B cell (primary cell): ENCODE measurements at regions of chr14 and their contacts with region 1.

Region 1: GRCh38 chr14:68283378-68284123 is 464.0 kb downstream of the RAD51B start:
- DNase-seq: peak; percentile 87
- ATAC-seq: peak; percentile 69
- H3K4me3 ChIP-seq: peak overlapping the region in 3 of 5 experiments; percentile 5 to 31 (median 7)
- H3K4me3 Mint-ChIP-seq: peak overlapping the region; percentile 83
- H3K27ac ChIP-seq: peak overlapping the region; percentile 91 to 98
- H3K27ac Mint-ChIP-seq: peak overlapping the region; percentile 98
- H3K4me1 ChIP-seq: peaks cover 93 to 96% of the 10 kb centered on the region in 2 donors
- H3K4me1 Mint-ChIP-seq: peaks cover 95% of the 10 kb centered on the region
- H3K27me3 ChIP-seq: no peaks in the 10 kb centered on the region
- H3K27me3 Mint-ChIP-seq: no peaks in the 10 kb centered on the region
- CTCF ChIP-seq: no peak

Region 2: DNA sequence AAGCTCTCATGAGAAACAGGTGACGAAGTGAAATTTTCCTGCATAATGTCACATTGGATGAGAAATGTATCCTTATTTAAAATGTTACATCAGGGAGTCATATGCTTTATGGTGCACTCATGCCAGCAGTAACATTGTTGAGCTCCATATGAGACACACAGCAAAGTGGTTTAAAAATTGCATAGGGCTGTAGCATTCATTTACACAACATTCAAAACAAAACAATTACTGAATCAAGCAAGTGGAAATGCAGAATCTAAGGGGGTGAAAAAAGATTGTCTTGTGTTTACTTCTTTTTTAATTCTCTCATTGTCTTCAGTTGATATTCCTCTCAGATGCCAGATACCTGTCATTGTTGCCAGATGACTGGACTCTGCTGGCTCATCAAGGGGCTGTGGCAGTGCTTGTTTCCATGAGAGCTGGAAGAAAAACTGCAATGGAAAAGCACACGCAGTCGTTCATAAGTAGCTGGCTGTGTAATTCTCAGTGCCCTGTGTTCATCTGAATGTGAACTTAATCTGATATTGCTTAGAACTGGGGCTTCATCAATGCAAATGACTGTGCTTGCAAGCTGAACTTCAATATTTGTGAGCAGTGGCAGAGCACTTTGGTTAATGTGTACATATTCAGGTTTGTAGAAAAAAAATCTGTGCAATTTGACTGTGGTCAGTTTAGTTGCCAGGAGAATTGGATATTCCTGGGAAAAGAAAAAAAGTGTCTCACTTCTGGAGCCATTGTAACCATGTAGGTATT is 158.4 kb before region 1 on chr14:
- CTCF ChIA-PET with region 1: no interaction called
- POLR2A ChIA-PET with region 1: no interaction called
- intact Hi-C with region 1: no loop called
- DNase-seq: no peak
- ATAC-seq: no peak
- H3K4me3 ChIP-seq: no peak overlapping the region
- H3K4me3 Mint-ChIP-seq: no peak overlapping the region
- H3K27ac ChIP-seq: no peak overlapping the region
- H3K27ac Mint-ChIP-seq: no peak overlapping the region
- H3K4me1 ChIP-seq: no peaks in the 10 kb centered on the region
- H3K4me1 Mint-ChIP-seq: no peaks in the 10 kb centered on the region
- H3K27me3 ChIP-seq: no peaks in the 10 kb centered on the region
- H3K27me3 Mint-ChIP-seq: no peaks in the 10 kb centered on the region
- CTCF ChIP-seq: no peak

Region 3: GRCh38 chr14:68268197-68268596 is 15.4 kb before region 1 on chr14:
- CTCF ChIA-PET with region 1: interaction called, 20 read pairs
- POLR2A ChIA-PET with region 1: interaction called, 15 read pairs
- intact Hi-C with region 1: loop called (anchors 1 kb)
- DNase-seq: peak; percentile 92
- ATAC-seq: peak; percentile 71
- H3K4me3 ChIP-seq: peak overlapping the region in 1 of 5 experiments; percentile 14
- H3K4me3 Mint-ChIP-seq: peak overlapping the region; percentile 72
- H3K27ac ChIP-seq: peak overlapping the region; percentile 78 to 94
- H3K27ac Mint-ChIP-seq: peak overlapping the region; percentile 95
- H3K4me1 ChIP-seq: peaks cover 78 to 89% of the 10 kb centered on the region in 2 donors
- H3K4me1 Mint-ChIP-seq: peaks cover 80% of the 10 kb centered on the region
- H3K27me3 ChIP-seq: no peaks in the 10 kb centered on the region
- H3K27me3 Mint-ChIP-seq: no peaks in the 10 kb centered on the region
- CTCF ChIP-seq: no peak

Region 4: GRCh38 chr14:68312884-68313610 is 29.5 kb after region 1 on chr14:
- CTCF ChIA-PET with region 1: interaction called, 8 read pairs
- POLR2A ChIA-PET with region 1: interaction called, 5 read pairs
- intact Hi-C with region 1: loop called (anchors 2 kb)
- DNase-seq: peak; percentile 69
- ATAC-seq: peak; percentile 78
- H3K4me3 ChIP-seq: no peak overlapping the region
- H3K4me3 Mint-ChIP-seq: peak overlapping the region; percentile 15
- H3K27ac ChIP-seq: peak overlapping the region; percentile 18 to 69
- H3K27ac Mint-ChIP-seq: peak overlapping the region; percentile 88
- H3K4me1 ChIP-seq: peaks cover 58 to 78% of the 10 kb centered on the region in 2 donors
- H3K4me1 Mint-ChIP-seq: peaks cover 75% of the 10 kb centered on the region
- H3K27me3 ChIP-seq: no peaks in the 10 kb centered on the region
- H3K27me3 Mint-ChIP-seq: no peaks in the 10 kb centered on the region
- CTCF ChIP-seq: no peak

Region 5: DNA sequence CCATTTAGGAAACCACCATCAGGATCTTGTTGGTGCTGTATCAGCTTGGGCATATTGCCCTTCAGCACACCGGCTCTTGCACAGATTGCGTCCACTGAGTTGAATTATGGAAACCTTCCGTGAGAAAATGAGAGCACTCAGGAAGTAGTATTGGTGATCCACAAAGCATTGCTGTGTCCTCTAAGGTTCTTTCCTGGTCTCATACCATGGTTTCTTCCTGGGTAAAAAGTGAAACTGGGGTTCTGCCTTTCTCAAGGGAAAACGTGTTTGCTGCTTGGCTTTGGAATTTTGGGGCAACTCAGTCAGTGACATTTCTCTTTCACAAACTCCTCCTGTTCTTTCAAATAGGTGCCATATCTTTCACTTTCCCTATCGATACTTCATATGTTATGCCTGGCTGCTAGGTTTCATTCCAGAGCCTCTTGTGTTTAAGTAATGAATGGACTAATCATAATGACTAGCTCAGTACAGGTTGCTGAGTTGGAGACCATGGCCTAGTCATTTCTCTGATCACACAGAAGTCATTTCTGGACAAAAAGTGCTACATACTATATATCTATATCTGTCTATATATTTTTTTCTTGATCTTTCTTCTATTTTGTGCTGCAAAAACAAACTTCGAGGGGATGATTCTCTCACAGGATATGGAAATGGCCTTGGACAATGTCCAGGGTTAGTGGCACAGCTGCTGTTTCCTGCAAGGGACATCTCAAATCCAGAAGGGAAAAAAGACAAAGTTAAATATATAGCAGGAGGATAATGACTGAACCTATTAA is 85.9 kb after region 1 on chr14:
- CTCF ChIA-PET with region 1: interaction called, 12 read pairs
- POLR2A ChIA-PET with region 1: interaction called, 4 read pairs
- intact Hi-C with region 1: loop called (anchors 2 kb)
- DNase-seq: peak; percentile 52
- ATAC-seq: peak; percentile 4
- H3K4me3 ChIP-seq: peak overlapping the region in 4 of 5 experiments; percentile 1 to 20 (median 14)
- H3K4me3 Mint-ChIP-seq: peak overlapping the region; percentile 73
- H3K27ac ChIP-seq: peak overlapping the region; percentile 78 to 84
- H3K27ac Mint-ChIP-seq: peak overlapping the region; percentile 97
- H3K4me1 ChIP-seq: peaks cover 78 to 92% of the 10 kb centered on the region in 2 donors
- H3K4me1 Mint-ChIP-seq: peaks cover 93% of the 10 kb centered on the region
- H3K27me3 ChIP-seq: no peaks in the 10 kb centered on the region
- H3K27me3 Mint-ChIP-seq: no peaks in the 10 kb centered on the region
- CTCF ChIP-seq: no peak

Region 6: DNA sequence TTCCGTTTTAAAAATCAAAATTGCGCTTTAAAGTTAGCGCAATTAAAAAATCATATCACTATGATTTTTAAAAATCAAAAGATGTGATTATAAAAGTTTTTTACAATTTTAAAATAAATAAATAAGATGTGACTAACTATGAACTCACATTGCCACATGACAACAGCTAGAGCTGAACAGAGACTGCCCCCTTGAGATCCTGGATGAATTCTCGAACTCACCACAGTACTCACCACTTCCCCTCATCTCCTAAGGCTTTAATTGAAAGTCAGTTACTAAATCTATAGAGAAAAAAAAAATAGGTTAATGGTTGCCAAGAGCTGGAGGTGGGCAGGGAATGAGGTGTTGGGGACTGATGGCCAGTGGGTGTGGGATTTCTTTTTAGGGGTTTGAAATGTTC is 125.1 kb after region 1 on chr14:
- CTCF ChIA-PET with region 1: interaction called, 13 read pairs
- POLR2A ChIA-PET with region 1: interaction called, 4 read pairs
- intact Hi-C with region 1: no loop called
- DNase-seq: peak; percentile 62
- ATAC-seq: peak; percentile 46
- H3K4me3 ChIP-seq: no peak overlapping the region
- H3K4me3 Mint-ChIP-seq: no peak overlapping the region
- H3K27ac ChIP-seq: peak overlapping the region; percentile 30 to 60
- H3K27ac Mint-ChIP-seq: peak overlapping the region; percentile 84
- H3K4me1 ChIP-seq: peaks cover 57 to 60% of the 10 kb centered on the region in 2 donors
- H3K4me1 Mint-ChIP-seq: peaks cover 61% of the 10 kb centered on the region
- H3K27me3 ChIP-seq: no peaks in the 10 kb centered on the region
- H3K27me3 Mint-ChIP-seq: no peaks in the 10 kb centered on the region
- CTCF ChIP-seq: peak; percentile 24

Region 7: GRCh38 chr14:68633071-68633991 is 349.8 kb after region 1 on chr14:
- CTCF ChIA-PET with region 1: no interaction called
- POLR2A ChIA-PET with region 1: interaction called, 10 read pairs
- intact Hi-C with region 1: no loop called
- DNase-seq: peak; percentile 40
- ATAC-seq: peak; percentile 65
- H3K4me3 ChIP-seq: peak overlapping the region in 2 of 5 experiments; percentile 17 to 41
- H3K4me3 Mint-ChIP-seq: peak overlapping the region; percentile 61
- H3K27ac ChIP-seq: no peak overlapping the region
- H3K27ac Mint-ChIP-seq: peak overlapping the region; percentile 88
- H3K4me1 ChIP-seq: peaks cover 16 to 26% of the 10 kb centered on the region in 2 donors
- H3K4me1 Mint-ChIP-seq: peaks cover 21% of the 10 kb centered on the region
- H3K27me3 ChIP-seq: no peaks in the 10 kb centered on the region
- H3K27me3 Mint-ChIP-seq: no peaks in the 10 kb centered on the region
- CTCF ChIP-seq: no peak

Region 8: GRCh38 chr14:68788996-68789820 is 505.7 kb after region 1 on chr14:
- CTCF ChIA-PET with region 1: interaction called, 24 read pairs
- POLR2A ChIA-PET with region 1: interaction called, 66 read pairs
- intact Hi-C with region 1: loop called (anchors 1 kb)
- DNase-seq: peak; percentile 88
- ATAC-seq: peak; percentile 11
- H3K4me3 ChIP-seq: peak overlapping the region; percentile 77 to 100 (median 94)
- H3K4me3 Mint-ChIP-seq: peak overlapping the region; percentile 97
- H3K27ac ChIP-seq: peak overlapping the region; percentile 50 to 100
- H3K27ac Mint-ChIP-seq: peak overlapping the region; percentile 100
- H3K4me1 ChIP-seq: peaks cover 32 to 59% of the 10 kb centered on the region in 2 donors
- H3K4me1 Mint-ChIP-seq: peaks cover 56% of the 10 kb centered on the region
- H3K27me3 ChIP-seq: no peaks in the 10 kb centered on the region
- H3K27me3 Mint-ChIP-seq: no peaks in the 10 kb centered on the region
- CTCF ChIP-seq: peak; percentile 81